PC-9 (cell line): ENCODE measurements at regions of chr20 and their contacts with region 1.

Region 1: DNA sequence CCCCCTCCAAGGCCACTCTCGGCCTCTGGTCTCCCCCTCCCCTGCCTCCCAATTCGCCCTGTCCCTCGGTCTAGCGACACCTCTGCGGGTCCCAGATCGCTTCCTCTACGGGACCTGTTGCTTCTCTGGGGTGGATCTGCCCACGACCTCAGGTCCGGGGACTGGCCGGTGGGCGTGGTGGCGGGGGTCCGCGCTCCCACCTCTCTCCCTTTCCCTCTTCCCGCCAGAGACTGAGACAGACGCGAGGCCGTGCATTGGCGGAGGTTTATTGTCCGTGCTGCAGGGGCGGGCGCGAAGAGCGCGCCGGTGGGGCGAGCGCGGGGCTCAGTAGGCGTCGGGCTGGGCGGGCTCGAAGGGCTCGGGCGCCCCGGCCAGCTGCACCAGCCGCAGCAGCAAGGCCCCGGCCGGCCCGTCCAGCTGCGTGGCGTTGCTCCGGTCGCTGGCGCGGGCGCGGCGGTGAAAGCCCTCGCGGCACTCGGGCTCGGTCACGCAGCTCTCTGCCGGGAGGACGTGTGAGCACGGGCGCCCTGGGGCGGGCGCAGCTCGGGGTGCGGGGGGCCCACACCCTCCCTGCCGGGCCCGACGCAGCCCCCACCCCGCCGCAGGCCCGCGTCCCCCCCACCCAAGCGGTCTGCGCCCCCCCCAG is 2.1 kb downstream of the AVP start:
- DNase-seq: no peak
- H3K4me3 ChIP-seq: no peak overlapping the region
- H3K27ac ChIP-seq: no peak overlapping the region
- H3K4me1 ChIP-seq: peaks cover 12% of the 10 kb centered on the region
- H3K27me3 ChIP-seq: no peaks in the 10 kb centered on the region
- CTCF ChIP-seq: no peak

Region 2: GRCh38 chr20:3146732-3147341 is 64.4 kb after region 1 on chr20:
- CTCF ChIA-PET with region 1: no interaction called
- POLR2A ChIA-PET with region 1: interaction called, 39 read pairs
- intact Hi-C with region 1: no loop called
- DNase-seq: no peak
- H3K4me3 ChIP-seq: no peak overlapping the region
- H3K27ac ChIP-seq: no peak overlapping the region
- H3K4me1 ChIP-seq: no peaks in the 10 kb centered on the region
- H3K27me3 ChIP-seq: no peaks in the 10 kb centered on the region
- CTCF ChIP-seq: no peak